Activated CD8-positive, alpha-beta memory T cell treated with anti-CD3 and anti-CD28 coated beads, Interleukin-2, amount 10 ng/mL, durations not matched to agents 7 days and 5 days (primary cell): ENCODE measurements at regions of chr5 and their contacts with region 1.

Region 1: DNA sequence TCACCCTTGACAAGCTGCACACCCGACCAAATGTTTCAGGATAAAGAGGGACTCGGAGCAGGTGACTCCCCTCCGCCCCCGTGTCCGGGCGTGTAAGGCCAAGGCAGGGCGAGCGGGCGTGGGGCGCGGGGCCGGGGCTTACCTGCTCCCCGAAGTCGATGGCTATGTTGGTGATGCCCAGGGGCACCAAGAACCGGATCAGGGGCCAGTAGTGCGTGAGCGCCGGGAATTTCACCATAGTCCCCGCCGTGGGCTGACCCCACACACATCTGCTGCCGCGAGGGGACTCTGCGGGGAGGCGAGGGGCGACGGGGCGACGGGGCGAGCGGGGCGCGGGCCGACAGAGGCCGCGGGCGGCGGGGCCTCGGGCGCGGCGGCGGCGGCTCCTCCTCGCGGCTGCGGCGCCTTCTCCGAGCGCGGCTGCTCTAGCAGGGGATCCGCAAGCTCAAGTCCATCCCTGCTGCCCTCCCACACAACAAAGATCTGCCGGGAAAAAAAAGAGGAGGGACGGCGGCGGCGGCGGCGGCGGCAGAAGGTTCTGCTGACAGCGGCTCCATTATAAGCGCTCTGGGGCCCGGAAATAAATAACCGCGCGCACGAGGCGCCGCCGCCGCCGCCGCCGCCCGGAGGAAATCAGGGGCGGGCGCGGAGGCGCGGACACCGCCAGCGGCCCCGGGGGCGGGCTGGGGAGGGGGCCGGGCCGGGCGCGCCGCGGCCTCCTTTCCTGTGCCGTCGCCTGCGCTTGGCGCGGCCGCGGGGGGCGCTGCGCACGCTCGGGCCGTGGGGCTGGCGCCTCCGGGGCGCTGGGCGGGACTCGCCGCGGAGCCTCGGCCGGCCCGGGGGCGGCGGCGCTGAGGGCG is at the start of gene ANKH:
- DNase-seq: peak; percentile 83
- ATAC-seq: peak; percentile 93
- H3K4me3 Mint-ChIP-seq: peak within 1 kb of the TSS; percentile 77
- H3K27ac Mint-ChIP-seq: peak within 1 kb of the TSS; percentile 81
- H3K4me1 Mint-ChIP-seq: peaks cover 25% of the 10 kb centered on the region
- H3K27me3 Mint-ChIP-seq: peaks cover 7% of the 10 kb centered on the region
- total RNA-seq, gene ANKH: 31.3 to 41.9 TPM

Region 2: DNA sequence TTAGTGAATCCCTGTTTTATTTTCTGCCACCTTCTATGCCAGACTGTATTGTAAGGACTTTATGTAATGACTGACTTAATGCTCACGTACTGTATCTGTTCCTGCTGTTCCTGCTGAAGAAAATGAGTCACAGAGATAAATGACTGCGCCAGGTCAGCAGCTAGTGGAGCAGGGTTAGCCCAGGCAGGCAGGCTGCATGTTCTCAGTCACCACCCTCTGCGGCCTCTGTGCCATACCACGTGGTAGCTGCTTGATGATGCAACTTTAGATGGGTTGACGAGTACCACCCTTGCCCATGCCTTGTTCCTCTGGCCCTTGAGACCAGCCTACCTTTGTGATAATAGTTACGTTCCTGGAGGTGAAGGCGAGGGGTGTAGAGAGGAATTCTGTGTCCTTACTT is 566.4 kb before region 1 on chr5:
- CTCF ChIA-PET with region 1: no interaction called
- DNase-seq: no peak
- ATAC-seq: no peak
- H3K4me3 Mint-ChIP-seq: no peak overlapping the region
- H3K27ac Mint-ChIP-seq: no peak overlapping the region
- H3K4me1 Mint-ChIP-seq: no peaks in the 10 kb centered on the region
- H3K27me3 Mint-ChIP-seq: no peaks in the 10 kb centered on the region

Region 3: DNA sequence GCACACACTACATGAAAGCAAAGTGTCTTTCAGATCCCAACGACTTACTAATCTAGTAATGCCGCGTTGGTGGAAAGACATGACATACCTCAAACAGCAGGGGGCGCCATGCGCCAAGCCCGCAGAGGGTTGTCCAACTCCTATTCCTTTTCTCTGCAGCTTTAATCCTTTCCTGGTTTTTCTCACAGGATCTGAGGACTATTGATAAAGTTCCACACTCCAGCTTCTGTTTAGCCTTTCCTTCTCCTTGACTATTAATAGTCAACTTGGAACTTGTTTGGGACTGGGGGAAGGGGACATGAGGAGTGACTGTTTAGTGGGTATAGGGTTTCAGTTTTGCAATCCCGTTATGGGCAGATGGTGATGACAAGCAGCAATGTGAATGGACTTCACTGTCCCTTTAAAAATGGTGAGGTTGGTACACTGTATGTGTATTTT is 144.0 kb before region 1 on chr5:
- CTCF ChIA-PET with region 1: interaction called, 25 read pairs
- DNase-seq: peak; percentile 78
- ATAC-seq: peak; percentile 78
- H3K4me3 Mint-ChIP-seq: no peak overlapping the region
- H3K27ac Mint-ChIP-seq: no peak overlapping the region
- H3K4me1 Mint-ChIP-seq: peaks cover 4% of the 10 kb centered on the region
- H3K27me3 Mint-ChIP-seq: no peaks in the 10 kb centered on the region

Region 4: GRCh38 chr5:14809369-14810155 is 61.9 kb before region 1 on chr5:
- CTCF ChIA-PET with region 1: interaction called, 14 read pairs
- DNase-seq: peak; percentile 93
- ATAC-seq: peak; percentile 97
- H3K4me3 Mint-ChIP-seq: peak overlapping the region; percentile 66
- H3K27ac Mint-ChIP-seq: peak overlapping the region; percentile 89
- H3K4me1 Mint-ChIP-seq: peaks cover 45% of the 10 kb centered on the region
- H3K27me3 Mint-ChIP-seq: no peaks in the 10 kb centered on the region

Region 5: DNA sequence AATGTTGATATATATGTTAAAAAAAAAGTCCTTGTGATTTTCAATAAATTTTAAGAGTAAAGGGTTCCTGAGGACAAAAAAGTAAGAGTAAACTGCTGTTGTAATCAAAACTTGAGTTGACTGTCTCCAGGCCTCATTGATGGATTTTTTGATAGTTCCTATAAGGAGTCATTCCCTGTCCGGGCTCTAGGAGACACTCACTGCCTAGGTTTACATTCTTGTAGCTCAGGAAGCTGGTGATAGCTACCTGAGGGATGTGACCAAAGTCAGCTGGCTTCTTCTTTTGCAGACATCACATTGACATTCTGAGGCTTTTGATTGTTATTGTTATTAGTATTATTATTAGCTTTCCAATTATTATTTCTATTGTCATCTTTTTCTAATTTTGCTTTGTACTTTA is 512.0 kb after region 1 on chr5:
- CTCF ChIA-PET with region 1: no interaction called
- DNase-seq: no peak
- ATAC-seq: no peak
- H3K4me3 Mint-ChIP-seq: no peak overlapping the region
- H3K27ac Mint-ChIP-seq: no peak overlapping the region
- H3K4me1 Mint-ChIP-seq: no peaks in the 10 kb centered on the region
- H3K27me3 Mint-ChIP-seq: no peaks in the 10 kb centered on the region